ENCODE measurements at regions of chr3 and their contacts with region 1.

Region 1: GRCh38 chr3:115602194-115602593 is 21.1 kb upstream of the GAP43 start:
- DNase-seq: no peak
- H3K4me3 ChIP-seq: no peak overlapping the region
- H3K27ac ChIP-seq: no peak overlapping the region
- H3K4me1 ChIP-seq: no peaks in the 10 kb centered on the region
- H3K27me3 ChIP-seq: no peaks in the 10 kb centered on the region
- CTCF ChIP-seq: no peak
- EP300 ChIP-seq: no peak
- POLR2A ChIP-seq: no peak

Region 2: DNA sequence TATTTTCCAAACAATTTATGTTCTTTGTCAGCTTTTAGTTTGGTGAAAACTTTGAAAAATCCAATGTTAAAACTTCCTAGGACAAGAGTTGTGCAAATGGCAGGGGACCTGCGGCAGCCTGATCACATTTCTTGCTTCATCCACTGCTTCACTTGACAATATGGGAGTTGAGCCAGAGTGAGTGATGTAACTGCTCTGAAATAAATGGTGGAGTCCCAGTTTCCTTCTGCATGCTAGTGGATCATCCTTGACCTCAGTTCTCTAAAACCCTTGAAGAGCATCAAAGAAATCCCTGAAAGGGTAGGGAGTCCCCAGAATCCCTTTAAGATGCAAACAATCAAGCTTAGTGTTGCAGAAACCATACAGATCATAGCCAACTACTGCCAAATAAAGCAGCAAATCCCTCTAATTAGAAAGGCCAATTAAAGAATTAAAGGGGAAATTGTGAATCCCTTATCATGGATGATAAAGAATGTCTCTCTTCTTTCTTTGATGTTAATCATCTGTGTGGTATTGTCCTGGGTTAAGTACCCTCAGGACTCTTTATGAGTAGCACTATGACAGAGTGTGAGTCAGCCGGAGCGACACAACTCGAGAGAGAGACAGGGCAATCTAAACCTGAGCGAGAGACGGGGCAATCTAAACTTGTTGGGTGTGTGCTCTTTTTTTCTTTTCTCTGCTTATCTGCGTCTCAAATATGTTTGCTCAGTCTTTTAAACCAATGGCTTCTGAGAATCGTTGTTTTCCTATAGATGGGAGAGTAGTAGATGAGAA is 20.6 kb before region 1 on chr3:
- intact Hi-C with region 1: loop called in 1 of 4 experiments (anchors 1 kb)
- DNase-seq: no peak
- H3K4me3 ChIP-seq: no peak overlapping the region
- H3K27ac ChIP-seq: no peak overlapping the region
- H3K4me1 ChIP-seq: no peaks in the 10 kb centered on the region
- H3K27me3 ChIP-seq: no peaks in the 10 kb centered on the region
- CTCF ChIP-seq: no peak
- EP300 ChIP-seq: no peak
- POLR2A ChIP-seq: no peak

Region 3: GRCh38 chr3:115652738-115653137 is 50.5 kb after region 1 on chr3:
- intact Hi-C with region 1: no loop called
- DNase-seq: no peak
- H3K4me3 ChIP-seq: no peak overlapping the region
- H3K27ac ChIP-seq: no peak overlapping the region
- H3K4me1 ChIP-seq: no peaks in the 10 kb centered on the region
- H3K27me3 ChIP-seq: no peaks in the 10 kb centered on the region
- CTCF ChIP-seq: no peak
- EP300 ChIP-seq: no peak
- POLR2A ChIP-seq: no peak

Measured in ovary (tissue), 10 donors.